H1 (cell line): ENCODE measurements at regions of chr14 and their contacts with region 1.

Region 1: GRCh38 chr14:37150414-37150813 is 22.0 kb downstream of the SLC25A21 start:
- DNase-seq: no peak
- H3K4me3 ChIP-seq: no peak overlapping the region
- H3K27ac ChIP-seq: no peak overlapping the region
- H3K4me1 ChIP-seq: no peaks in the 10 kb centered on the region; a peak in 1 of 7 replicates
- H3K27me3 ChIP-seq: no peaks in the 10 kb centered on the region
- CTCF ChIP-seq: peak in 2 of 3 experiments; percentile 26 to 58; a peak in 2 of 4 replicates
- EP300 ChIP-seq: no peak
- POLR2A ChIP-seq: no peak
- RAD21 ChIP-seq: peak; percentile 45 to 46; a peak in 3 of 4 replicates

Region 2: GRCh38 chr14:36647824-36648753 is 502.3 kb before region 1 on chr14:
- CTCF ChIA-PET with region 1: interaction called, 30 read pairs
- POLR2A ChIA-PET with region 1: no interaction called
- DNase-seq: peak in 1 of 2 experiments; percentile 80
- H3K4me3 ChIP-seq: peak overlapping the region; percentile 19 to 64 (median 57); a peak in 7 of 8 replicates
- H3K27ac ChIP-seq: no peak overlapping the region
- H3K4me1 ChIP-seq: peaks cover 0 to 15% (median 7%) of the 10 kb centered on the region in 4 experiments; a peak in 6 of 7 replicates
- H3K27me3 ChIP-seq: peaks cover 73 to 85% (median 82%) of the 10 kb centered on the region in 4 experiments
- CTCF ChIP-seq: peak; percentile 63 to 67 (median 64)
- EP300 ChIP-seq: no peak
- POLR2A ChIP-seq: no peak
- RAD21 ChIP-seq: peak; percentile 75 to 77

Region 3: GRCh38 chr14:37023875-37024565 is 126.4 kb before region 1 on chr14:
- CTCF ChIA-PET with region 1: interaction called, 22 read pairs
- POLR2A ChIA-PET with region 1: no interaction called
- DNase-seq: no peak
- H3K4me3 ChIP-seq: no peak overlapping the region
- H3K27ac ChIP-seq: no peak overlapping the region
- H3K4me1 ChIP-seq: no peaks in the 10 kb centered on the region
- H3K27me3 ChIP-seq: no peaks in the 10 kb centered on the region
- CTCF ChIP-seq: peak in 2 of 3 experiments; percentile 31 to 52; a peak in 2 of 4 replicates
- EP300 ChIP-seq: no peak
- POLR2A ChIP-seq: no peak
- RAD21 ChIP-seq: peak; percentile 23 to 57

Region 4: DNA sequence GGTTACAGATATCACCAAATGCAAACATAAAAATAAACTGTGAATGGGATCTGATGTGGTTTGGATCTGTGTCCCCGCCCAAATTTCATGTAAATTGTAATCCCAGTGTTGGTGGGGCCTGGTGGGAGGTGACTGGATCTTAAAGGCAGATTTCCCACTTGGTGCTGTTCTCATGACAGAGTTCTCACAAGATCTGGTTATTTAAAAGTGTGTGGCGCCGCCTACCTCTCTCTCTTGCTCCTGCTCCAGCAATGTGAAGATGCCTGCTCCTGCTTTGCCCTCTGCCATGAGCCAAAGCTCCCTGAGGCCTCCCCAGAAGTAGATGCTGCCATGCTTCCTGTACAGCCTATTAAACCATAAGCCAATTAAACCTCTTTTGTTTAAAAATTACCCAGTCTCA is 25.8 kb before region 1 on chr14:
- CTCF ChIA-PET with region 1: interaction called, 13 read pairs
- POLR2A ChIA-PET with region 1: no interaction called
- DNase-seq: peak; percentile 9 to 50
- H3K4me3 ChIP-seq: no peak overlapping the region
- H3K27ac ChIP-seq: no peak overlapping the region
- H3K4me1 ChIP-seq: peaks cover 0 to 3% (median 0%) of the 10 kb centered on the region in 4 experiments; a peak in 1 of 7 replicates
- H3K27me3 ChIP-seq: no peaks in the 10 kb centered on the region
- CTCF ChIP-seq: peak; percentile 27 to 50 (median 40)
- EP300 ChIP-seq: no peak
- POLR2A ChIP-seq: no peak
- RAD21 ChIP-seq: peak; percentile 59 to 61

Region 5: GRCh38 chr14:37131205-37131604 is 19.2 kb before region 1 on chr14:
- CTCF ChIA-PET with region 1: interaction called, 30 read pairs
- POLR2A ChIA-PET with region 1: no interaction called
- DNase-seq: no peak
- H3K4me3 ChIP-seq: no peak overlapping the region
- H3K27ac ChIP-seq: no peak overlapping the region
- H3K4me1 ChIP-seq: no peaks in the 10 kb centered on the region
- H3K27me3 ChIP-seq: no peaks in the 10 kb centered on the region
- CTCF ChIP-seq: no peak
- EP300 ChIP-seq: no peak
- POLR2A ChIP-seq: no peak
- RAD21 ChIP-seq: no peak

Region 6: DNA sequence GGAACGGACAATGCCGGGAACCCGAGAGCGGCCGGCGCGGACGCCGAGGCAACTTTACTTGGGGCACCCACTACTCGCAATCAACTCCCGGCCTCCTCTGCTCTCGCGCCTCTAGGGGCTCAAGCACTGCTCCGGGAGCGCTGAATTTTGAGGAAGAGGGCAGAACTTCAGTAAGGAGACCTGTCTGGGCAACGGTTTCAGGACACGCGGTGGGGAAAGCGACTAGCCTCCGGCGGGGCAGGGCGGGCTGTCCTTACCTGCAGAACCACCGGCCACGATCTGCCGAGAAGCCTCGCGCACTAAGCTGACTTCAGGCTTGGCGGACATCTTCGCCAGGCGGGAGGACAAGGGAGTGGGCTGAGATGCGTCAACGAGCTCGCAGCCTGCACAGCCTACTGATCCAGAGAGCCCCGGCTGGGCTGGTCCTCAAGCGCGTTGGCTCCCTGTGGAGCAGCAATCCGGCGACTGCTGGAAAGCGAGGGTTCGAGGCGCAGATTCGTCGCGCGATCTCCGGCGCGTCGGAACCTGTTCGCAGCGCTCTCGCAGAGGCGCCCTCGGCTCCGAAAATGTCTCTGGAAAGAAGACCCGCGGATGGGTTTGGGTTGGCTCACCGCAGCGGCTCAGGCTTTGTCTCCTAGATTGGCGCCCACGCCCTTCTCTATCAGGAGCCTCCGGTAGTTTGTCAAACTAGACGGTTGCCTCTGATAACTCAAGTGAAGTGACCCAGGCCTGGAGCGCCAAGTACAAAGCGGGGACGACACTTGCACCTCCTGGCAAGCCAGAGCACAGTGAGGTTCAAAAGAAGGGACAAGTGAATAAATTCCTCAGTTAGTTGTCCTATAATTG is 21.8 kb after region 1 on chr14 and contains the start of gene SLC25A21:
- CTCF ChIA-PET with region 1: interaction called, 15 read pairs
- POLR2A ChIA-PET with region 1: interaction called, 6 read pairs
- DNase-seq: peak; percentile 61 to 86
- H3K4me3 ChIP-seq: peak within 1 kb of the TSS; percentile 79 to 89 (median 84)
- H3K27ac ChIP-seq: peak within 1 kb of the TSS; percentile 88
- H3K4me1 ChIP-seq: peaks cover 4 to 18% (median 13%) of the 10 kb centered on the region in 4 experiments; a peak in 5 of 7 replicates
- H3K27me3 ChIP-seq: no peaks in the 10 kb centered on the region
- CTCF ChIP-seq: peak in 1 of 3 experiments; percentile 13; a peak in 1 of 4 replicates
- EP300 ChIP-seq: 0 out of 3 replicates have a peak, but pooled peaks of 1 of the 2 experiments have one; percentile 3
- POLR2A ChIP-seq: peak; percentile 82 to 98
- RAD21 ChIP-seq: 0 out of 4 replicates have a peak, but pooled peaks of 1 of the 2 experiments have one; percentile 1
- total RNA-seq, gene SLC25A21: 6.9 and 8.7 TPM in 2 replicates

Region 7: GRCh38 chr14:37230551-37231194 is 80.3 kb after region 1 on chr14:
- CTCF ChIA-PET with region 1: interaction called, 19 read pairs
- POLR2A ChIA-PET with region 1: no interaction called
- DNase-seq: no peak
- H3K4me3 ChIP-seq: no peak overlapping the region
- H3K27ac ChIP-seq: no peak overlapping the region
- H3K4me1 ChIP-seq: no peaks in the 10 kb centered on the region
- H3K27me3 ChIP-seq: no peaks in the 10 kb centered on the region
- CTCF ChIP-seq: peak in 2 of 3 experiments; percentile 41 to 61; a peak in 2 of 4 replicates
- EP300 ChIP-seq: no peak
- POLR2A ChIP-seq: no peak
- RAD21 ChIP-seq: peak; percentile 36 to 49; a peak in 3 of 4 replicates